ENCODE measurements at regions of chr14 and their contacts with region 1.

Region 1: GRCh38 chr14:69673578-69674305 is 62.3 kb downstream of the SUSD6 start:
- DNase-seq: peak; percentile 40
- ATAC-seq: no peak
- H3K4me3 Mint-ChIP-seq: peak overlapping the region; percentile 60
- H3K27ac Mint-ChIP-seq: peak overlapping the region; percentile 99
- H3K4me1 Mint-ChIP-seq: peaks cover 95% of the 10 kb centered on the region
- H3K27me3 Mint-ChIP-seq: no peaks in the 10 kb centered on the region

Region 2: DNA sequence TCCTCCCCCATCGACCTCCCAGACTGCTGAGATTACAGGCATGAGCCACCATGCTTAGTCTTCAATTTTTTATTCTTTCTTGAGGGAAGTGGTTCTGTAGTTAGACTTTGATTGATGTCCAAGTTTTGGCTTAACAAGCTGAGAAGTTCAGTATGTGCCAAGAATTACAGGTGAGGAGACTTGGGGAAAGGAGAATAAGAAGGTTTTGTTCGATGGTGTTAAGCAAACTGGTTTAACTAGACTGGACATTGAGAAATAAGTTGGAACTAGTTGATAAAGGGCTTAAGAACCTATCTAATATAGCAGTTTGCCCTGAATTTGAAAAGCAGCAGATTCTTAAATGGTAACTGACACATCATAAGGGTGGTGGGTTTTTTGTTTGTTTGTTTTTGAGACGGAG is 221.8 kb before region 1 on chr14:
- CTCF ChIA-PET with region 1: no interaction called
- POLR2A ChIA-PET with region 1: no interaction called
- intact Hi-C with region 1: no loop called
- DNase-seq: no peak
- ATAC-seq: no peak
- H3K4me3 Mint-ChIP-seq: no peak overlapping the region
- H3K27ac Mint-ChIP-seq: no peak overlapping the region
- H3K4me1 Mint-ChIP-seq: no peaks in the 10 kb centered on the region
- H3K27me3 Mint-ChIP-seq: no peaks in the 10 kb centered on the region

Region 3: DNA sequence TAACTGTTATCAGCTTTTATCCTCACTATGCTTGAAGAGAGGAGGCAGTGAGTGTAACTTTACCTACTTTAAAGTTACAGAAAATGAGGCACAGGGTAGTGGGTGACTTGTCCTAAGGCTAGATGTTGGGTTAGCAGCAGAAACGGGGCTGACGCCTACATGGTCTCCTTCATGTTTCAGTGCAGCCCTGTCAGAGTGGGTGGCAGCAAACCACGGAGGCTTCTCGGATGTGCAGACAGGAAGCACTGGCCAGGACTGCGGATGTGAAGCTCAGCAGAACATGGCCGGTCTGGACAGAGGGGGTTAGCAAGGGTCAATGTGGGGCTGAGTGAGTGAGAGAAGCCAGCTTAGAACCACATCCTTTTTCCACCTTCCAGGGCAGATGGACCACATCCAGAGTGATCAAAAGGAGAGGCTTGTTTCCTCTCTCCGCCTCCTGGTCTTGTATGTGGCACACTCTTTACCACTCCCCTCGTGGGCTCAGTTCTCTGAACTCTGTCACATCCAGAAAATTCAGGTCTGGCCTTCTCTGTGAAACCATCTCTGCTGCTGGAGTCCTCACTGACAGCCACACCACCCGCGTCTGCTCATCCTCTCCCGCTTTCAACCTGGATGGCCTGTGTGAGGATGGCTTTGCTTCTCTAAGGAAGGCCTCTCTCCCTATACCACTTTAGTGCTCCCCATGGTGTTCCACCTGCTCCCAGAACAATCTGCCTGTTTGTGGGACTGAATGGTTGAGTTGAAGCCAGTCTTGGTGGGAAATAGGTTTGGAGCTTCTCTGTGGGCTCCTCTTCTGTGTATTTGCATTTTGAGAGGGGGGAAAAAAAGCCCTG is 48.2 kb before region 1 on chr14:
- CTCF ChIA-PET with region 1: interaction called, 24 read pairs
- POLR2A ChIA-PET with region 1: interaction called, 7 read pairs
- intact Hi-C with region 1: no loop called
- DNase-seq: peak; percentile 89
- ATAC-seq: peak; percentile 81
- H3K4me3 Mint-ChIP-seq: peak overlapping the region; percentile 66
- H3K27ac Mint-ChIP-seq: peak overlapping the region; percentile 96
- H3K4me1 Mint-ChIP-seq: peaks cover 96% of the 10 kb centered on the region
- H3K27me3 Mint-ChIP-seq: no peaks in the 10 kb centered on the region

Region 4: DNA sequence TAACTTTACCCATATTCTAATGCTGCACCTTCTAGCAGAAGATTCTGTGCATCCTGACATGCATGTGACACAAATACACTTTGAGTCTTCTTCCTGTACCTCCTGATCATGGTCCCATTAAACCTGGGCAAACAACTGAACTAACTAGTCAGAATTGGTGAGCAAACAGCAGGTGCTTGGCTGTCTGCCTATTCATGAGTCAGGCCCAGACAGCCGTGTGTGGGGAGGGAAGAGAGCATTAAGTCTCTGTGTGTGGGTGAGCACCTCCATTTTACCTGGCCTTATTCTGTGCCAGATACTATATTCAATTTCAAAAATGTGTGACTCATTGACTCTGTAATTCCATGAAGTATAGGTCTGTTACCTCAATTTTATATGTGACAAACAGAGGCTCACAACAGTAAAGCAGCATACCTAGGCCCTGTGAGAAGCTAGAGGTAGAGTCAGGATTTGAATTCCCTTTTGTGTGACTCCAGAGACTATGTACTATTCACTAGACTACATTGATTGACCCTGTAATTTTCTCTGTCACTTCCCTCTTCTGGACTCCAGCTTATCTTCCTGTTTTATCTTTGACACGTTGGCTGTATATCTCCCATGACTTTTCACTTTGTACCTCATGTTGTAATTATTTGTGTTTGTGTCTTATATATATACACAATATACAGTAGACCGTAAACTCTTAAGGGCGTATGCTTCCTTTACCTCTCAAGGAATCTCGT is 30.1 kb before region 1 on chr14:
- CTCF ChIA-PET with region 1: interaction called, 4 read pairs
- POLR2A ChIA-PET with region 1: interaction called, 6 read pairs
- intact Hi-C with region 1: loop called (anchors 1 kb)
- DNase-seq: peak; percentile 89
- ATAC-seq: peak; percentile 95
- H3K4me3 Mint-ChIP-seq: peak overlapping the region; percentile 0
- H3K27ac Mint-ChIP-seq: peak overlapping the region; percentile 93
- H3K4me1 Mint-ChIP-seq: peaks cover 83% of the 10 kb centered on the region
- H3K27me3 Mint-ChIP-seq: no peaks in the 10 kb centered on the region

Region 5: DNA sequence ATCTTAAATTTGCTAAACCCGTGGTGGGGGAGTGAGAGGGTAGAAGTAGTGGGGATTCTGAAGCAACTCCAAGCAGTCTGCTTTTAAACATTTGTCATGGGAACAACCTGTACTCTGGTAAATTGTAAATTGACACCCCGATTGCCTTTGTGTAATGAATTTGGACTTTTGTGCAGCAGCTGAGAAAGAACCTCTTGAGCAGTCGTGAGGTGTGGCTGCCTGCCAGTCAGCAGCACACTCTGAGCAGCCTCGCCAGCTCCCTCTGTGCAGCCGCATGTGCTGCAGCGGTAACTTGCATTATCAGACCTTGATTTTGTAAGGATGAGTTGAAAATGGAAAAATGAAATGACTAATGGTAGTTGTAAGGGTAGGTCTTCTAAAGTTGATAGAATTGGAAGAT is 12.0 kb after region 1 on chr14:
- CTCF ChIA-PET with region 1: interaction called, 14 read pairs
- POLR2A ChIA-PET with region 1: interaction called, 7 read pairs
- intact Hi-C with region 1: loop called (anchors 1 kb)
- DNase-seq: peak; percentile 78
- ATAC-seq: peak; percentile 74
- H3K4me3 Mint-ChIP-seq: peak overlapping the region; percentile 49
- H3K27ac Mint-ChIP-seq: peak overlapping the region; percentile 94
- H3K4me1 Mint-ChIP-seq: peaks cover 81% of the 10 kb centered on the region
- H3K27me3 Mint-ChIP-seq: no peaks in the 10 kb centered on the region

Region 6: DNA sequence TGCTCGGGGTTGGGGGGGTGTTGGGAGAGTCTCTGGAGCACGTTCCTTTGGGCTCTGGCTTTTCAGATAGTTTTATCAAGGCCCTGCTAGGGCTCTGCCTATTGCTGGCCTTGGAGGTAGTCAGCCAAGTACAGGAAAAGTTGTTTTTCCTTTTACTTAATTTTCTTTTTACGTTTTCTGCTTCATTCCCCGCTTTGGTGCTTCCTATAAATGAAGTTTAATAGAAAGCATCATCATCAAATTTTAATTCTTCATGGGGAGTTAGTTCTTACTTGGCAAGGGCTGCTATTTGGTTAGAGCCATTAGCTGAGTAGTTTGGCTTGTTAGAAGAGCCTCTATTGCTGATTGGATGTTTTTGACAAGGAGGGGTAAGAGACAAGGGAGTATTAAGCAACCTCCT is 763.1 kb after region 1 on chr14:
- CTCF ChIA-PET with region 1: no interaction called
- POLR2A ChIA-PET with region 1: no interaction called
- intact Hi-C with region 1: no loop called
- DNase-seq: no peak
- ATAC-seq: no peak
- H3K4me3 Mint-ChIP-seq: no peak overlapping the region
- H3K27ac Mint-ChIP-seq: no peak overlapping the region
- H3K4me1 Mint-ChIP-seq: no peaks in the 10 kb centered on the region
- H3K27me3 Mint-ChIP-seq: peaks cover 10% of the 10 kb centered on the region

Region 7: DNA sequence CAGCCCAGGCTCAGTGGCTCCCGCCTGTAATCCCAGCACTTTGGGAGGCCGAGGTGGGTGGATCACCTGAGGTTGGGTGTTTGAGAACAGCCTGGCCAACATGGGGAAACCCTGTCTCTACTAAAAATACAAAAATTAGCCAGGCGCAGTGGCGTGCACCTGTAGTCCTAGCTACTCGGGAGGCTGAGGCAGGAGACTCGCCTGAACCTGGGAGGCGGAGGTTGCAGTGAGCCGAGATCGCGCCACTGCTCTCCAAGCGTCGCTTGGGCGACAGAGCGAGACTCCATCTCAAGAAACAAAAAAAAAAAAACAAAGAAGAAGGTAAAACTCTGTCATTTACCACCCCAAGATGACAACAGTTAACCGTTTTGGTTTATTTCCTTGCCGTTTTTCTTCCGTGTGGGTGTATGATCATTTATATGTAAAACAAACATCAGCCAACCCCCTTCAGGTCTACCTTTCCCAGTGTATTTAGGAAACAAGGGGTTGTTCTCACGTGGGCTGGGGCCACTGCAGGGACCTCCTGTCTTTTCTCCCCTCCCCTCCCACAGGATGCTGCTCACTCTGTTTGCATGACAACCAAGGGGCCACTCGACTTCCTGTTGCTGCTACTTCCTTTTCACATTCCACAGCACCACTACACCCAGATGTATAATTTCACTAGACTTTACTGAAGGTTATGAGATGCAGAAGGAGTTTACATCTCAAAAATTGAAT is 981.5 kb after region 1 on chr14:
- CTCF ChIA-PET with region 1: no interaction called
- POLR2A ChIA-PET with region 1: no interaction called
- intact Hi-C with region 1: loop called in 1 of 2 experiments (anchors 10 kb)
- DNase-seq: peak; percentile 82
- ATAC-seq: peak; percentile 80
- H3K4me3 Mint-ChIP-seq: peak overlapping the region; percentile 76
- H3K27ac Mint-ChIP-seq: peak overlapping the region; percentile 99
- H3K4me1 Mint-ChIP-seq: peaks cover 90% of the 10 kb centered on the region
- H3K27me3 Mint-ChIP-seq: no peaks in the 10 kb centered on the region

Measured in activated CD4-positive, alpha-beta T cell treated with anti-CD3 and anti-CD28 coated beads for 36 hours (primary cell).